Activated CD4-positive, alpha-beta T cell treated with anti-CD3 and anti-CD28 coated beads for 36 hours (primary cell): ENCODE measurements at regions of chr10 and their contacts with region 1.

Region 1: GRCh38 chr10:103745341-103746227 is 109.8 kb downstream of the SH3PXD2A start:
- DNase-seq: peak; percentile 82
- ATAC-seq: peak; percentile 81
- H3K4me3 Mint-ChIP-seq: peak overlapping the region; percentile 33
- H3K27ac Mint-ChIP-seq: peak overlapping the region; percentile 89
- H3K4me1 Mint-ChIP-seq: peaks cover 45% of the 10 kb centered on the region
- H3K27me3 Mint-ChIP-seq: no peaks in the 10 kb centered on the region

Region 2: DNA sequence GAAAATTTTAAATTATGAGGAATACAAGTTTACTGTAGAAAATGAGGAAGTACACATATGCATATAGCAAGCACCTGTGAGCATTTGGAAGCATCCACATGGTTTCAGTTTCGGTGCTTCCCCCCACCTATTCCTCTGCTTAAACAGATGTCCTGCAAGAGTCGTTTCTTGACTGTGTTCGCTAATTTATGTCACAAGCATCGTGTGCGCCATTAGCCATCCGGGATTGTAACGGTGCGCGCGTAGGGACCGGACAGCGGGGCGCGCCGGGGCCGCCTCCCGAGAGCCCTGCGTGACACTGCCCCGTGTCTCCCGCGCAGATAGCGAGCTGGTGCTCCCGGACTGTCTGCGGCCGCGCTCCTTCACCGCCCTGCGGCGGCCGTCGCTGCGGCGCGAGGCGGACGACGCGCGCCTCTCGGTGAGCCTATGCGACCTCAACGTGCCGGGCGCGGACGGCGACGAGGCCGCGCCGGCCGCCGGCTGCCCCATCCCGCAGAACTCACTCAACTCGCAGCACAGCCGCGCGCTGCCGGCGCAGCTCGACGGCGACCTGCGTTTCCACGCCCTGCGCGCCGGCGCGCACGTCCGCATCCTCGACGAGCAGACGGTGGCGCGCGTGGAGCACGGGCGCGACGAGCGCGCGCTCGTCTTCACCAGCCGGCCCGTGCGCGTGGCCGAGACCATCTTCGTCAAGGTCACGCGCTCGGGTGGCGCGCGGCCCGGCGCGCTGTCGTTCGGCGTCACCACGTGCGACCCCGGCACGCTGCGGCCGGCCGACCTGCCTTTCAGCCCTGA is 161.2 kb before region 1 on chr10:
- CTCF ChIA-PET with region 1: no interaction called
- POLR2A ChIA-PET with region 1: no interaction called
- intact Hi-C with region 1: no loop called
- DNase-seq: peak; percentile 83
- ATAC-seq: peak; percentile 69
- H3K4me3 Mint-ChIP-seq: peak overlapping the region; percentile 79
- H3K27ac Mint-ChIP-seq: peak overlapping the region; percentile 95
- H3K4me1 Mint-ChIP-seq: peaks cover 10% of the 10 kb centered on the region
- H3K27me3 Mint-ChIP-seq: no peaks in the 10 kb centered on the region

Region 3: GRCh38 chr10:103712570-103713498 is 32.8 kb before region 1 on chr10:
- CTCF ChIA-PET with region 1: no interaction called
- POLR2A ChIA-PET with region 1: no interaction called
- intact Hi-C with region 1: no loop called
- DNase-seq: peak; percentile 89
- ATAC-seq: peak; percentile 93
- H3K4me3 Mint-ChIP-seq: no peak overlapping the region
- H3K27ac Mint-ChIP-seq: no peak overlapping the region
- H3K4me1 Mint-ChIP-seq: no peaks in the 10 kb centered on the region
- H3K27me3 Mint-ChIP-seq: no peaks in the 10 kb centered on the region

Region 4: DNA sequence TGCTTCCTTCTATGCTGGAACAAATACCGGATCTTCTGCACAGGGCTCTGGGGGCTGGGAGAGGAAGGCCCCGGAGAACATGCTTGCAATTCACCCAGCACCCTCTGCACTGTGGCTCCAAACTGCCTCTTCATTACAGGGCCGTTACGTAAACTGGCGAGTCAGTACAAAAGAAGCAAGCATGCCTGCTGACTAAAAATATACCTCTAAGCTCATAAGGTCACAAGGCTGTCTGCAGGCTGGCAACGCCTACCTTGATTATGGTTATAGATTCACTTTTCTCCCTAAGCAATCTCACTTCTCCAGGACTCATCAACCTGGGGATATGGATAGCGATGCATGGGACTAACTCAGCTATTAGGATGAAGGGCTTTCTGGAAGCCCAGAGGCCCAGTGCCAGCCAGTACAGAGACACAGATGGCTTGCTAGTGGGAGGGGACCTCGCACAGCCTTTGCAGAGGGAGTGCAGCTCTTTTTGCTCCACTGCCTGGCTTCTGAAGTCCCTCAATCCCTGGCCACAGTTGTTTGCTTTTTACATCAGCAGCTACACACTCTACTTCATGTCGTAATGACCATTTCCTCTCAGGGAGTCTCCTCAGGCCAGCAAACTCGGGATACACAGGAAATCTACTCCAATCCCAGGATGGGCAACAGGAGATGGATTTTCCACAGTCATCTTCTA is 13.7 kb after region 1 on chr10:
- CTCF ChIA-PET with region 1: interaction called, 33 read pairs
- POLR2A ChIA-PET with region 1: no interaction called
- intact Hi-C with region 1: loop called (anchors 1 to 2 kb)
- DNase-seq: peak; percentile 73
- ATAC-seq: peak; percentile 83
- H3K4me3 Mint-ChIP-seq: peak overlapping the region; percentile 11
- H3K27ac Mint-ChIP-seq: peak overlapping the region; percentile 51
- H3K4me1 Mint-ChIP-seq: peaks cover 47% of the 10 kb centered on the region
- H3K27me3 Mint-ChIP-seq: no peaks in the 10 kb centered on the region

Region 5: GRCh38 chr10:103936022-103936421 is 190.4 kb after region 1 on chr10:
- CTCF ChIA-PET with region 1: no interaction called
- POLR2A ChIA-PET with region 1: no interaction called
- intact Hi-C with region 1: no loop called
- DNase-seq: no peak
- ATAC-seq: no peak
- H3K4me3 Mint-ChIP-seq: no peak overlapping the region
- H3K27ac Mint-ChIP-seq: no peak overlapping the region
- H3K4me1 Mint-ChIP-seq: no peaks in the 10 kb centered on the region
- H3K27me3 Mint-ChIP-seq: no peaks in the 10 kb centered on the region